Aorta (tissue), 5 donors: ENCODE measurements at regions of chr9 and their contacts with region 1.

Region 1: GRCh38 chr9:94867281-94867841 is 140.9 kb downstream of the AOPEP start:
- DNase-seq: peak in 1 of 2 donors; percentile 70
- ATAC-seq: peak; percentile 84
- H3K4me3 ChIP-seq: no peak overlapping the region
- H3K27ac ChIP-seq: peak overlapping the region; percentile 76 to 100
- H3K4me1 ChIP-seq: peaks cover 5 to 17% of the 10 kb centered on the region in 2 donors
- H3K27me3 ChIP-seq: no peaks in the 10 kb centered on the region

Region 2: GRCh38 chr9:94805585-94805984 is 61.8 kb before region 1 on chr9:
- intact Hi-C with region 1: loop called (anchors 5 to 10 kb)
- DNase-seq: no peak
- ATAC-seq: peak; percentile 34
- H3K4me3 ChIP-seq: no peak overlapping the region
- H3K27ac ChIP-seq: peak overlapping the region in 1 of 2 donors; percentile 64
- H3K4me1 ChIP-seq: peaks cover 6 to 15% of the 10 kb centered on the region in 2 donors
- H3K27me3 ChIP-seq: no peaks in the 10 kb centered on the region

Region 3: GRCh38 chr9:94900222-94901018 is 33.1 kb after region 1 on chr9:
- intact Hi-C with region 1: loop called (anchors 2 to 5 kb)
- DNase-seq: no peak
- ATAC-seq: peak; percentile 80
- H3K4me3 ChIP-seq: no peak overlapping the region
- H3K27ac ChIP-seq: peak overlapping the region; percentile 86 to 96
- H3K4me1 ChIP-seq: peaks cover 3 to 4% of the 10 kb centered on the region in 2 donors
- H3K27me3 ChIP-seq: no peaks in the 10 kb centered on the region

Region 4: GRCh38 chr9:94908011-94908563 is 40.7 kb after region 1 on chr9:
- intact Hi-C with region 1: loop called in 1 of 2 experiments (anchors 5 kb)
- DNase-seq: no peak
- ATAC-seq: peak; percentile 64
- H3K4me3 ChIP-seq: no peak overlapping the region
- H3K27ac ChIP-seq: peak overlapping the region; percentile 94 to 98
- H3K4me1 ChIP-seq: peaks cover 3 to 11% of the 10 kb centered on the region in 2 donors
- H3K27me3 ChIP-seq: no peaks in the 10 kb centered on the region

Region 5: GRCh38 chr9:94922098-94922607 is 54.8 kb after region 1 on chr9:
- intact Hi-C with region 1: loop called in 1 of 2 experiments (anchors 5 kb)
- DNase-seq: peak; percentile 87
- ATAC-seq: peak; percentile 53
- H3K4me3 ChIP-seq: no peak overlapping the region
- H3K27ac ChIP-seq: peak overlapping the region; percentile 100
- H3K4me1 ChIP-seq: peaks cover 13% of the 10 kb centered on the region in 2 donors
- H3K27me3 ChIP-seq: no peaks in the 10 kb centered on the region

Region 6: GRCh38 chr9:94952565-94953373 is 85.4 kb after region 1 on chr9:
- intact Hi-C with region 1: loop called in 1 of 2 experiments (anchors 5 kb)
- DNase-seq: peak in 1 of 2 donors; percentile 51
- ATAC-seq: peak; percentile 79
- H3K4me3 ChIP-seq: no peak overlapping the region
- H3K27ac ChIP-seq: peak overlapping the region; percentile 90 to 95
- H3K4me1 ChIP-seq: peaks cover 4 to 11% of the 10 kb centered on the region in 2 donors
- H3K27me3 ChIP-seq: no peaks in the 10 kb centered on the region

Region 7: GRCh38 chr9:95004411-95005277 is 137.3 kb after region 1 on chr9:
- intact Hi-C with region 1: loop called in 1 of 2 experiments (anchors 5 kb)
- DNase-seq: peak; percentile 47 to 86
- ATAC-seq: peak; percentile 42
- H3K4me3 ChIP-seq: peak overlapping the region; percentile 92 to 100
- H3K27ac ChIP-seq: peak overlapping the region; percentile 100
- H3K4me1 ChIP-seq: peaks cover 0 to 4% of the 10 kb centered on the region in 2 donors
- H3K27me3 ChIP-seq: no peaks in the 10 kb centered on the region